Activated T-helper 1 cell treated with anti-CD3 and anti-CD28 coated beads, Interleukin-12 subunit alpha, Interleukin-12 subunit beta, Interleukin-2, Interleukin-4 antibody, amounts not matched to agents 30 ng/mL and 10 ng/mL and 1 ng/mL, durations not matched to agents 14 hours and 24 hours and 36 hours (primary cell): ENCODE measurements at regions of chr11 and their contacts with region 1.

Region 1: DNA sequence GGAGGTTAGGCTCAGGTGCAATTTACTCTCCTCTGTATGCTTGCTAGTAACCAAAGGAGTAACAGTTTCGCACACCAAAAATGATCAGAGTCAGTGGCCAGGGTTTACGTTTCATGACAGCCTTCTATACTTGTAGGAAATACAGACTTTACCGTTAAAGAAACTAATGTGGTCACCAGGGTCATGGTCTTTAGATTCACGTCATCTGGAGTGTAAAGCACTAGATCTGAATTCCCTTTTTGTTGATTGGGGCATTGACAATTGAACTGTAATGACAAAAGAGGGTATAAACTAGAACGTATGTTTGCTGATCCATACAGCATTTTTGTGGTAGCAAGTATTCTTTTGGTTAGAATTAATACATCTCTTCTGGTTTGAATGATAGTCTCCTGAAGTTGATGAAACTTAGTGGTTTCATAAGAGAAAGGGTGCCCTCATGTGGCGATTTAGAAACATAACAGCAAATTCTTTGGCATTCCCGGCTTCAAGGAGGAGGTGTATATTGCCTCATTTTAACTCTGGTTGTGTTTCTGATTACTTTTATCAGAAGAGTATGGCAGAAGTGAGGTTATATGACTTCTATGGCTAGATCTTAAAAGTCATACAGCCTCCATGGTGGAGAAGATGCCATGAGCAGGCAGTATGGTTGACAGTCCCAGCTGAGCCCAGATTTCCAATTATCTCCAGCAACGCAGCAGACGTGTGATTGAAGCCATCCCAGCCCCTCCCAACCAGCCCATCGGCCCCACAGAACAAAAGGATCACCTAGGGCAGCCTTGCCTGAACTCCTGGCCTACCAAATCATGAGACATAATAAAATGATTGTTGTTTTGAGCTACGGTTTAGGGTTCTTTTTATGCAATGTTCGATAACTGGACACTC is 35.1 kb downstream of the MMP7 start:
- DNase-seq: peak; percentile 18
- H3K4me3 Mint-ChIP-seq: no peak overlapping the region
- H3K27ac Mint-ChIP-seq: no peak overlapping the region
- H3K4me1 Mint-ChIP-seq: peaks cover 30% of the 10 kb centered on the region
- H3K27me3 Mint-ChIP-seq: peaks cover 2% of the 10 kb centered on the region

Region 2: DNA sequence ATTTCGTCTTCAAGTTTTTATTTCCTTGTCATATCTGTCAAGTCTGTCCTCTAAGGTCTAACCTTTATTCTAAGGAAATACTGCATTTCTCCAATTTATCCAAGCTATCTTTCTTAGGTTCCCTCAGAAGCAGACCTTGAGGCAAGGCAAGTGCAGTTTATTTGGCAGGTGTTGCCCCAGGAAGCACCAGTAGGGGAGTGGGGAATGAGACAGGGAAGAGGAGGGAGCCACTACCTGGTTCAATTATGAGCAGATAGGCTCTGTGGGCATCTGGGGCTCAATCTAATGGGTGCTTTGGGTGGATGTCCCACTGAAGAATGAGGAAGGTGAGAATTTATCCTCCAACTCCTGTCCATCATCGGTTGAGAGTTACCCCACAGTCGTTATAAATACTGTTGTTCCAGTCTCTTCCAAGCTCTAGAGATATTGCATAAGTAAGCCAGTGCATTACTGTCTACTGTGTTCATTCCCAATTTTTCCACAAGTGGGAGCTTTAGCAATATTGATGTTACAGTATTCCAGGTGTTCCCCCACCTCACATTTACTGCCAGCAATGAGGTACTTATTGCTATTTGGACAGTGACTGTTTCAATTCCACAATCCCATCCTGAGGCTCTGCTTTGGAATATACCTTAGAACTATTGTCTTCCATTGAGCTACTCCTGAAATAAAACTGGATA is 735.5 kb before region 1 on chr11:
- intact Hi-C with region 1: no loop called
- DNase-seq: no peak
- H3K4me3 Mint-ChIP-seq: no peak overlapping the region
- H3K27ac Mint-ChIP-seq: no peak overlapping the region
- H3K4me1 Mint-ChIP-seq: no peaks in the 10 kb centered on the region
- H3K27me3 Mint-ChIP-seq: no peaks in the 10 kb centered on the region

Region 3: DNA sequence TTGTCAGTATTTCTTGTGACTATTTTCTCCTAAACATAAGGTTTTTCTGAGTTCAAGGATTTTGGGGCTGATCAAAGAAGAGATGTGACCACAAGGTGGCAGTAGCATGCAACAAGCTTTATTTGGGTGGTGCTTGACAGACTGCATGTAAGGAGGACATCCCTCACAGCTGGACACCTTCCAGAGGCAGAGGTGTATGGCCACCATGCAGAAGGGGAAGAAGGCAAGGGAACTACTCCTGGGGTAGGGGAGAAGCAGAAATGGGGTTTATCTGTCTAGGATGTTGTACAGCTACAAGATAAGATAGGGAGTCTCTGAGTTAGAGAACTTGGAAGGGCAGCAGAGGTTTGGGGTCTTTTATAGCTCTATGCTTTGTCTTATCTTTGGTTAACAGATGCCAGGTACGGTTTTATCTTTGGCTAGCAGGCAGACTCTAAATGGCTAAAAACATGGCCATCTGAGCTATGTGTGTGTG is 153.5 kb before region 1 on chr11:
- intact Hi-C with region 1: loop called (anchors 1 kb)
- DNase-seq: peak; percentile 55
- H3K4me3 Mint-ChIP-seq: no peak overlapping the region
- H3K27ac Mint-ChIP-seq: no peak overlapping the region
- H3K4me1 Mint-ChIP-seq: peaks cover 35% of the 10 kb centered on the region
- H3K27me3 Mint-ChIP-seq: no peaks in the 10 kb centered on the region

Region 4: GRCh38 chr11:102390667-102391465 is 104.5 kb before region 1 on chr11:
- intact Hi-C with region 1: loop called (anchors 1 kb)
- DNase-seq: peak; percentile 36
- H3K4me3 Mint-ChIP-seq: no peak overlapping the region
- H3K27ac Mint-ChIP-seq: no peak overlapping the region
- H3K4me1 Mint-ChIP-seq: peaks cover 52% of the 10 kb centered on the region
- H3K27me3 Mint-ChIP-seq: no peaks in the 10 kb centered on the region

Region 5: DNA sequence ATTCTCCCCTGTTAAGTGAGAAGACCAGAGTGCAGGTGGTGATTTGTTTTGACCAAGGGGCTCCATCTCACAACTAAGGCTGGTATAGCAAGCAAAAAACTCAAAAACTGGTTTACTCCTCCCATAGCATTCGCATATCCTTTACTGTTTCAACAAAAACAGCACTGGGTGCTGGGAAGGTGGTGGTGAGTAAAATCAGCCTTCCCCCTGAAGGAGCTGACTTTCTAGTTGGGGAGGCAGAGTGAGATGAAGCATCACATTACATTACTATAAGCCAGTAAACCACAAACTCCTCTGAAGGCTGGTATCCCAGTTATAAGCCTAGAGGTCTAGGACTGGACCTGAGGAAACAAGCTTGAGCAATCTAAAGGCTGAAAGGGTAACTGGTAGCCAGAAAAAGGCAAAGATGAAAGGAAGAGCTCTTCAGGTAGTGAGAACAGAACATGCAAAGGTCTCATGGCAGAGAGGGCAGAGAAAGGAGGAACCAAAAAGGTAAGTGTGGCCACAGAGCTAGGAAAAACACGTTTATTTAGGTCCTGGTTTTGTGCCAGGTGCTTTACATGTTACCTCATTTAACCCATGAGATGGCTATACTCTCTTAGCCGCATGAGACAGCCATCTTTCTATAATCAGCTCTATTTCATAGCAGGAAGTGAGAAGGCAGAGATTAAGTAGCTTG is 65.1 kb before region 1 on chr11:
- intact Hi-C with region 1: no loop called
- DNase-seq: no peak
- H3K4me3 Mint-ChIP-seq: peak overlapping the region; percentile 62
- H3K27ac Mint-ChIP-seq: peak overlapping the region; percentile 92
- H3K4me1 Mint-ChIP-seq: peaks cover 55% of the 10 kb centered on the region
- H3K27me3 Mint-ChIP-seq: no peaks in the 10 kb centered on the region

Region 6: GRCh38 chr11:102476812-102477211 is 18.6 kb before region 1 on chr11:
- intact Hi-C with region 1: loop called (anchors 1 kb)
- DNase-seq: no peak
- H3K4me3 Mint-ChIP-seq: peak overlapping the region; percentile 40
- H3K27ac Mint-ChIP-seq: peak overlapping the region; percentile 88
- H3K4me1 Mint-ChIP-seq: peaks cover 64% of the 10 kb centered on the region
- H3K27me3 Mint-ChIP-seq: peaks cover 2% of the 10 kb centered on the region

Region 7: DNA sequence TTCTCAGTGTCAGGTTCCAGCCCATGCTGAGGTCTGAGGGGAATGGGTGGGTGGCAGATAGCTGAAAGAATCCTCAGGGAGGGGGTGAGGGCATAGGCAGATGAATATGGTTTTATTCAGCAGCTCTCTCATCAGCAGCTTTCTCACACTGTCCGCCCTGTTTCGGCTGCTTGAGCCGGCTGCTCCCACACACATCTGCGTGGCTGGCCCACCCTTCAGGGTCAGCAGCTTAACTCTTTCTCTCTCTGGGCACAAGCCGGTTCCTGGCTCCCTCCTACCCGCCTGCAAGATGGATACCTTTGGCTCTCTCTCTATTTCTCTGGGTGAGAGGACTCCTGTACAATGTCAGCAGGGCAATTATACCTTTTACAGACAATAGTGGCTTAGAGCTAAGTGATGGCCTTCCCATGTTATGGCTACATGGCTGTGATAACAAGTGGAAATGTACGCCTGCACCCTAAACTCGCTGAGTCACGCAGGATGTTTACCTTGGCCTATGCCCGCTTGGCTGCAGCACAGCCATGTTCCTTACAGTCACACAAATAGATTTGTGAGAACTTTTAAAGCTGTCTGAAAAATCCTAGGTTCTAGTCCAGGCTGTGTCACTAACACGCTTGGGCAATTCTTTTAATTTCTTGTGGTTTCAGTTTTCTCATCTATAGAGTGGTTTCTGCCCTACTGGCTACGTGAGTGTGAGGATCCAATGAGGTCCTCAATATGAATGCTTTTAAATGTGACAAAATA is 125.6 kb after region 1 on chr11:
- intact Hi-C with region 1: no loop called
- DNase-seq: no peak
- H3K4me3 Mint-ChIP-seq: no peak overlapping the region
- H3K27ac Mint-ChIP-seq: no peak overlapping the region
- H3K4me1 Mint-ChIP-seq: no peaks in the 10 kb centered on the region
- H3K27me3 Mint-ChIP-seq: peaks cover 13% of the 10 kb centered on the region